ENCODE measurements at regions of chr5 and their contacts with region 1.

Region 1: DNA sequence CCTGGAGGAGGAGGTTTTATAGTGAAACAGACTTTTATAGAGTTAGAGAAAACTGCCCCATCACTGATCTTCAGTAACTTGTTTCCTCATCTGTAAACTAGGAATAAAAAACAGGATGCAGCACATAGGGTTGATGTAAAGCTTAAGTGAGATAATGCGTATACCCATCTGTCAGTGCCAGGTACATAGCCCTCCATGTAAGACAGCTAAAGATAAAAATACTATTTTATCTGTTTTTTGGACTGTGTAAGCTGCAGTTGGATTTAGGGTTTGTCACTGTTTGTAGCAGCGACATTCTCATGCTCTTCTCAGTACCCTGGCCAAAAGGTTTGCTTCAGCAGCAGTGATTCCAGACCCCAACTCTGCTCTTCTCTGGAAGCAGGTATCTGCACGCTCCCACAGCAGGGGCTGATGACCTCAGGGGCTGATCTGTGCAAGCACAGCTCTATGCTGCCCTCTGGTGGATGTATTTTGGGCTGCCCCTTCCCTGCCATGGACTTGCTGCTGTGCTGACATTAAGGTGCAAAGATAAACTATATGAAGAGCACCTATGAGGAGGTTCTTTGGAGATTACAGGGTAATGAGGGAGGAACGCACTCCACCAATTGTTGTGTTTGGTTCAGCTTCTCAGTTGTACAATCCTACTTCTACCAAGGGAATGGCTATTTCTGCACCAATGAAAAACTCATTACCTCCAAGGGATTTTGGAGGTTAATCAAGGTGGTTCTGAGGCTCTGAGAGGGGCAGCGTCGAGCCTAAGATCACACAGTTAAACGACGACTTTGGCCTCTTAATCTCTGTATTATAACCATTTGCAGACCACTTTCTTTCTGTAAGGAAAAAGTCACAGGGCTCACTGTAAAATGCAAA is 13.1 kb downstream of the HMHB1 start:
- DNase-seq: peak; percentile 80
- H3K4me3 ChIP-seq: no peak overlapping the region
- H3K27ac ChIP-seq: no peak overlapping the region
- H3K4me1 ChIP-seq: peaks cover 6% of the 10 kb centered on the region
- H3K27me3 ChIP-seq: no peaks in the 10 kb centered on the region
- CTCF ChIP-seq: peak; percentile 97

Region 2: DNA sequence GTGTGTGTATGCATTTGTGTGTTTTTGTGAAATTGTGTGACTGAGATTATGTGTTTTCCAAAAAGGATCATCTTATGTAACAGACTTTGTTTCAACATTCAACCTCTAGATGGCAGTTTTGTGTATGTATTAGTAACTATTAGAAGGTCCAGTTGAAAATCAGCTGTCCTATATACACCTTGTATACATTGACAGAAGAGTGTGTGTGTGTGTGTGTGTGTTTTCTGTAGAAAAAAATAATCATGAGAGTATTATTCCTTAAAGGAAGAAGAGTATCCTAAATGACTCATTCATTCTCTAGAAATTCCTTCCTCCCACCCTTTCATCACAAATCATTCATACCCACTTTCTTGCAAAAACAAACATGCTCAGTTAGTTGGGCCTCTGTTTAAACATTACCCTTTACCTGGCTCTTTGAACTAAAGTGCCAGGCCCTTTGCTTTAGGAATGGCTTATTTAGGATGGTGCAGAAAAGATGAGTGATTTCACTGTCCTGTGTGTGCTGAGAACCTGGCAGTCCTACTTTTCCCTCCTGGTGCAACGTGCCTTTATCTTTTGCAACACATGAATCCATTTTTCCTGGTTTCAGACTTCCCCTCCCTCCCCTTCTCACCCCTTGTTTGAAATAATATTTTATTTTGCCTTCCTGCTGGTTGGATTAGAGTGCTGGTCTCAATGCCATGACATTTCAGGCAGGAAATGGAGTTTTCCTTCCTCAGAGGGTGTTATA is 902.7 kb before region 1 on chr5:
- intact Hi-C with region 1: loop called (anchors 10 kb)
- DNase-seq: no peak
- H3K4me3 ChIP-seq: no peak overlapping the region
- H3K27ac ChIP-seq: peak overlapping the region; percentile 62
- H3K4me1 ChIP-seq: peaks cover 60% of the 10 kb centered on the region
- H3K27me3 ChIP-seq: no peaks in the 10 kb centered on the region
- CTCF ChIP-seq: peak; percentile 69

Region 3: DNA sequence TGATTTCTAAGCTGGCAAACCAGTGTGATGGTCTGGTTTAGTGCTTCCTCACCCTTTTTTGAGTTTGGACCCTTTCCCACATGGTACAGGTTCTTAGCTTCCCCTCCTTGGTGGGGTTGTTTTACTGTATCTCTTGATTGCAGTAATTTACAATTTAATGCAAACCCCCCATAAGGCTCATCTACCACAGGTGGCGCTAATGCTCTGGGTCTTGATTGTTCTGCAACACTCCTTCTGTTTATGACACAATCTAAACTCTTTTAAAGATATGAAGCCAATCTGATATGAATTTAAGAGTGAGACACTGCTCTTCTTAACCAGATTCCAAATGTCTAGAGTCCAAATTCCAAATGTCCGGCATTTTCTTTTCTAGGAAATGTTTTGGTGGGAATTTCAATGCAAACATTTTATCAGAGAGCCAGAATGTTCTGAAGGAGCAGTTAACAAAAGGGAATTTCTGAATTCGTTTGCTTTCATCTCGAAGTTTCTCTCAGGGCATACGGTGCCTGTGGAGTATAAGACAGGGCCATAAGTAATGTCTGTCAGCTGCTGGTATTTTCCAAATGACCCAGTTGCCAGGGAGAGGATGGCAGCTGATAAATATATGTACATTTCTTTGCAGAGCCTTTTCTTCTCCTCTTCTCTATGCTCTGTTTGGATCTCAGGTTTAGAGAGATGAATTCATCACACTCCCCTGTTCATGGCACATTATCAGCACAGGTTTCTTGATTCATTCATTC is 808.1 kb before region 1 on chr5:
- intact Hi-C with region 1: loop called (anchors 10 kb)
- DNase-seq: no peak
- H3K4me3 ChIP-seq: no peak overlapping the region
- H3K27ac ChIP-seq: no peak overlapping the region
- H3K4me1 ChIP-seq: peaks cover 29% of the 10 kb centered on the region
- H3K27me3 ChIP-seq: no peaks in the 10 kb centered on the region
- CTCF ChIP-seq: peak; percentile 52

Region 4: DNA sequence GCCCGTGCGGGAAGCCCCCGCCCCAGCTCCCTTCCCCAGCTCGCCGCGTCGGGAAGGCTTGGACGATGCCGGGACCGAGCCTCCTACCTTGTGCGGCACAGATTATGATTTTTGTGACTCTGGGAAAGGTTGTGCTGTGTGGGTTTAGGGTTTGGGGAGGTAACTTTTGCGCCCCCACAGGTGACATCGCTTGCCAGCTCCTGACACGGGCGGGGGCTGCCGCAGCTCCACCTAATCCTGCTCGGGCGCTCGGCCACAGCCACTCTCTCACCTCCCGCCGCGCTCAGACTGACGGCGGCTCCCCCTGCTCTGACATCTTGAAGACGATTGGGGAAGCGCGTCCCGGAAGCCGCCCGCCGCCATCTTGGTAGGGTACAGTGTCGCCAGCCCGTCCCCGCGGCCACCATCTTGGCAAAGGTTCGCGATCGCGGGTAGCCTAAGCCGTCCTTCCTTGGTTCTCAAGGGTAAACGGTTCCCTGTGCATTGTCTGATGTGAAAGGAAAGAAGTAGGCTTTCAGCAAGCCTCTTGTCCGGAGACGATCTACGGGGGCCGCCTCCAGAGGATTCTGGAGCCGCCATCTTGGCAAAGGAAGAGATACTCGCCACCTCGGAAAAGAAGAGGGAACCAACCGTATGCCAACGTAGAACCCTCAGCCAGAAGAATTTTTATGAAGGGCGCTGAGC is 419.9 kb before region 1 on chr5:
- intact Hi-C with region 1: loop called (anchors 5 kb)
- DNase-seq: peak; percentile 89
- H3K4me3 ChIP-seq: peak overlapping the region; percentile 88
- H3K27ac ChIP-seq: peak overlapping the region; percentile 100
- H3K4me1 ChIP-seq: peaks cover 48% of the 10 kb centered on the region
- H3K27me3 ChIP-seq: no peaks in the 10 kb centered on the region
- CTCF ChIP-seq: no peak

Region 5: DNA sequence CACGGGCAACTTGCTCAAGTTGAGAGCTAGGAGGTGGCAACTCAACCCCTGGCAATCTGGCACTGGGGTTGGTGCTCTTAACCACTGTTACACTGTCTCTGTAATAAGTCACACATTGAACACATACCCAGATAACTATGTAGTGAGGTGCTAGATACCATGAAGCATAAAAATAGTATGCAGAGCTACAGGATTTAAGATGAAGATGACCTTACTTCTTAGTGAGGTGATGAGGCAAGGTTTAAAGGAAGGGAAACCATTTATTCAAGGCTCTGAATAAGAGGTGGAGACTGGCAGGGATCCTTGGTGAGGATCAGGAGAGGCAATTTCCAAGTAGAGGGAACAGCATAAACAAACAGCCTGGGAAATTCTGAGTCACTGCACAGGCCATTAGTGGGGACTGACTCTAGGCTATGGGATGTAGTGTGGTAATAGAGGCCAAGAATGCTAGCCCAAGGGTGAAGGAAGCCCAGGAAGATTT is 354.0 kb before region 1 on chr5:
- intact Hi-C with region 1: no loop called
- DNase-seq: no peak
- H3K4me3 ChIP-seq: no peak overlapping the region
- H3K27ac ChIP-seq: no peak overlapping the region
- H3K4me1 ChIP-seq: peaks cover 19% of the 10 kb centered on the region
- H3K27me3 ChIP-seq: no peaks in the 10 kb centered on the region
- CTCF ChIP-seq: no peak

Region 6: DNA sequence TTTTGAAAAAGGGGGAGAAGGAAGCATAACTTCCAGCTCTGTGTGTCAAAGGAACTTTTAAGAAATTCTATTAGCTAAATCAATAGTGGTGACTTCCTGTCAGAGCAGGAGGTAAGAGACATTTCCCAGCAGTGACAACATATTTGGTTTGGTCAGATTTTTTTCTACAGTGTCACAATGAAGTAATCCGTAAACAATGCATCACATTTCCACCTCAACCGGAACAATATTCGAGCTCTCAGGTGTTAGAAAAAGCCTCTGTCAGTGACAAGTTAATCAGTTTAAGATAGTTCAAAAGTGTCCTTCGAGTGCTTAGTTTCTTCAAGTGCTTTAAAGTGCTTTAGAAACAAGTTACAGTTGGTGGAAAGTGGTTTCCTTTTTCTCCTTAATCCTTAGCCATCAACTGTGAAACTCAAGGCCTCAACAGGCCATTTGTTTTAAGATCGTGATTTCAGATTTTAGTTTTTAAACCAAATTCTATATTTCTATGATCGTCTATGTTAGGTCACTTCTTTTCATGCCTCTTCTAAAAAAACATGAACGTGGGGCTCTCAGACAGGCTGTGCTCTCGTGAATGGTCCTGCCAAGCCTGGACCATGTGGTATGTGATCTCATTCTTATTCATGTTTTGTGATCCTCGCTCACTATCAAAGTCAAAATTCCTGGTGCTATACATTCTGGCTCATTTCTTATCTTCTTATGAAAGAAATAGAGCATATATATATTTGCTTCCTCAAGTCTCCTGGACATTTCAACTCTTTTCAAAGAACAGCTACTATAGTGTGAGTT is 195.0 kb before region 1 on chr5:
- intact Hi-C with region 1: no loop called
- DNase-seq: no peak
- H3K4me3 ChIP-seq: no peak overlapping the region
- H3K27ac ChIP-seq: no peak overlapping the region
- H3K4me1 ChIP-seq: no peaks in the 10 kb centered on the region
- H3K27me3 ChIP-seq: no peaks in the 10 kb centered on the region
- CTCF ChIP-seq: no peak